Activated CD4-positive, alpha-beta memory T cell treated with anti-CD3 and anti-CD28 coated beads, Interleukin-2, amount 10 ng/mL, durations not matched to agents 7 days and 5 days (primary cell): ENCODE measurements at regions of chr5 and their contacts with region 1.

Region 1: GRCh38 chr5:171907725-171908343 is 98.6 kb downstream of the FBXW11 start:
- DNase-seq: peak; percentile 46
- H3K4me3 Mint-ChIP-seq: no peak overlapping the region
- H3K27ac Mint-ChIP-seq: no peak overlapping the region
- H3K4me1 Mint-ChIP-seq: peaks cover 44% of the 10 kb centered on the region
- H3K27me3 Mint-ChIP-seq: no peaks in the 10 kb centered on the region

Region 2: DNA sequence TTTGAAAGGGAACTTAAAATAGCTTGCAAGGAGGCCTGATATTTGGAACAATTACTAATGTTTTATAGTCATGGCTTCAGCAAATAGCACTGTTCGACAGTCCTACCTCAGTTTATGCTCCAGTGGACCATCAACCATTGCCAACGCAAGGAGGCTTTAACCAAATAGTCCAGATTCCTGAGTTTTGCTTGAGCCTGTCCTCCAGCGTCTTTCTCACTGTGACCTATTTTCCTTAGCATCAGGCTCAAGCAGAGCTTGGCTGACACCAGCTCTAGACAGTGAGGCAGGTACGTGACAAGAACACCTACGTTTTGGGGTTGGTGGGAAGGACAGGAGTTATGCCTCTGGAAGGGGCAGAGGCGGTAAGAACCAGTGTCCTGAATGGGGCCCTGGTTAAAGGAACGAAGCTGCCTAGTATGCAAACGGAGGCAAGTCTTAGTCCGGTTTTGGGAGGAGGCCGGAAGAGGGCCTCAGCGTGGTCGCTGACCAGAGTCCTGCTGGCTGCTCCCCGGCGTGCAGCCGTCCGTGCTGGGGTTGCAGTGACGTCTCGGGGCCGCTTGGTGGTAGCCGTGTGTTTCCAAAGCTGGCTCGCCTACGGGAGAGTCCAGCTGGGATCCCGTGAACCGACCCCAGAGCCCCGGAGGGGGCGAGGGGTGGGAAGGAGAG is 489.4 kb before region 1 on chr5:
- CTCF ChIA-PET with region 1: interaction called, 22 read pairs
- POLR2A ChIA-PET with region 1: no interaction called
- DNase-seq: peak; percentile 64
- H3K4me3 Mint-ChIP-seq: peak overlapping the region; percentile 64
- H3K27ac Mint-ChIP-seq: no peak overlapping the region
- H3K4me1 Mint-ChIP-seq: peaks cover 10% of the 10 kb centered on the region
- H3K27me3 Mint-ChIP-seq: peaks cover 30% of the 10 kb centered on the region

Region 3: DNA sequence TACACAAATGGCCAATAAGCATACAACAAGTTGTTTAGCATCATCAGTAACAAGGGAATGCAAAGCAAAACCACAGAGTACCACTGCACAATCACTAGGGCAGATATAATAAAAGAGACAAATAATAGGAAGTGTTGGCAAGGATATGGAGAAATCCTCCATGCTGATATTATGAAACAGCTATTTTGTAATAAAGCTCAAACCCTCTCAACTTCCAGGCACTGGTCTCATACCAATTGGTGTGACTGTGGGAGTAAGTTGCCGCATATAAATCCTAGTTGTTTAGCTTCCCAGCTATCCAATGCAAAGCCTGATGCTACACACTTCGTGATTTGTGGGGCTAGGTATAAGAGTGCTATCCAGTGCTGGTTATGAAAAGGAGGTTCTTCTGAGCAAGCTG is 33.6 kb before region 1 on chr5:
- CTCF ChIA-PET with region 1: no interaction called
- POLR2A ChIA-PET with region 1: no interaction called
- DNase-seq: no peak
- H3K4me3 Mint-ChIP-seq: no peak overlapping the region
- H3K27ac Mint-ChIP-seq: no peak overlapping the region
- H3K4me1 Mint-ChIP-seq: no peaks in the 10 kb centered on the region
- H3K27me3 Mint-ChIP-seq: no peaks in the 10 kb centered on the region

Region 4: GRCh38 chr5:172006321-172007174 is 98.7 kb after region 1 on chr5 and contains the start of gene FBXW11:
- CTCF ChIA-PET with region 1: interaction called, 31 read pairs
- POLR2A ChIA-PET with region 1: interaction called, 18 read pairs
- DNase-seq: peak; percentile 95
- H3K4me3 Mint-ChIP-seq: peak within 1 kb of the TSS; percentile 90
- H3K27ac Mint-ChIP-seq: peak within 1 kb of the TSS; percentile 94
- H3K4me1 Mint-ChIP-seq: peaks cover 50% of the 10 kb centered on the region
- H3K27me3 Mint-ChIP-seq: no peaks in the 10 kb centered on the region
- total RNA-seq, gene FBXW11: 37.4 to 38.8 TPM

Region 5: DNA sequence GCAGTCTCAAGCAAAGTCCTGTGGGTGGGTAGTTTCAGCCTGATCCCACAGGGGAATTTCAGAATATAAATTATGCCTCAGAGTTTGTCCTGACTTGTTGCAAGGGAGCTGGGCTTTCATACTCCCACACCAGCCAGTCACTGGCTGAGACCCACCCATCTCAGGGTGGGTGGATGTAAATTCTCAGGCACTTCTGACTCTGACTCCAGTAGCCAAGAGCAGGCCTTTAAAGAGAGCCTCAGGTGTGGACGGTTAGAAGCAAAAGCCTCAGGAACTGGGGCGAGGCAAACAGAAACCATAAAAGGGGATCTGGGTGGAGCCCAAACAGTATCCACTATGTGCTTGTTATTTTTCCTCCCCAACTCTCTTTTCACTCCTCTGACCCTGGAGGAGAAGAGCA is 127.2 kb after region 1 on chr5:
- CTCF ChIA-PET with region 1: interaction called, 16 read pairs
- POLR2A ChIA-PET with region 1: no interaction called
- DNase-seq: no peak
- H3K4me3 Mint-ChIP-seq: no peak overlapping the region
- H3K27ac Mint-ChIP-seq: no peak overlapping the region
- H3K4me1 Mint-ChIP-seq: peaks cover 9% of the 10 kb centered on the region
- H3K27me3 Mint-ChIP-seq: no peaks in the 10 kb centered on the region

Region 6: GRCh38 chr5:172044631-172045314 is 136.9 kb after region 1 on chr5:
- CTCF ChIA-PET with region 1: interaction called, 19 read pairs
- POLR2A ChIA-PET with region 1: no interaction called
- DNase-seq: no peak
- H3K4me3 Mint-ChIP-seq: no peak overlapping the region
- H3K27ac Mint-ChIP-seq: peak overlapping the region; percentile 24
- H3K4me1 Mint-ChIP-seq: peaks cover 13% of the 10 kb centered on the region
- H3K27me3 Mint-ChIP-seq: no peaks in the 10 kb centered on the region

Region 7: DNA sequence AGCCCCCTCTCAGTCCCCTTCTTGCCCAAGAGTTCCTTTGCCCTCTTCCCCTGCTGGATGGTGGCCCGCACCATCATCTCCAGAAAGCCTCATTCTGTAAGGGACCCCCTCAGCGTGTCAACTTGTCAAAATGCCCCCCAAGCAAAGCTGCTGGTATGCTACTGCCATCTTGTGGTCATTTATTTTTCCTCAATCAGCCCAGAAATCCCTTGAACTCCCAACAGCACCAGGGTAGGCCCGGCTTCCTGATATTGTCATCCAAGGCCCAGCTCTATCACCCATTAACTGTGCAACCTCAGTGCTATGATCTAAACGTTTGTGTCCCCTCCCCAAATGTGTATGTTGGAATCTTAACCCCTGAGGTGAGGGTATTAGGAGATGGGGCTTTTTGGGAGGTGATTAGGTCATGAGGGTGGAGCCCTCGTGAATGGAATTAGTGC is 151.8 kb after region 1 on chr5:
- CTCF ChIA-PET with region 1: interaction called, 20 read pairs
- POLR2A ChIA-PET with region 1: no interaction called
- DNase-seq: no peak
- H3K4me3 Mint-ChIP-seq: no peak overlapping the region
- H3K27ac Mint-ChIP-seq: peak overlapping the region; percentile 27
- H3K4me1 Mint-ChIP-seq: peaks cover 16% of the 10 kb centered on the region
- H3K27me3 Mint-ChIP-seq: no peaks in the 10 kb centered on the region

Region 8: DNA sequence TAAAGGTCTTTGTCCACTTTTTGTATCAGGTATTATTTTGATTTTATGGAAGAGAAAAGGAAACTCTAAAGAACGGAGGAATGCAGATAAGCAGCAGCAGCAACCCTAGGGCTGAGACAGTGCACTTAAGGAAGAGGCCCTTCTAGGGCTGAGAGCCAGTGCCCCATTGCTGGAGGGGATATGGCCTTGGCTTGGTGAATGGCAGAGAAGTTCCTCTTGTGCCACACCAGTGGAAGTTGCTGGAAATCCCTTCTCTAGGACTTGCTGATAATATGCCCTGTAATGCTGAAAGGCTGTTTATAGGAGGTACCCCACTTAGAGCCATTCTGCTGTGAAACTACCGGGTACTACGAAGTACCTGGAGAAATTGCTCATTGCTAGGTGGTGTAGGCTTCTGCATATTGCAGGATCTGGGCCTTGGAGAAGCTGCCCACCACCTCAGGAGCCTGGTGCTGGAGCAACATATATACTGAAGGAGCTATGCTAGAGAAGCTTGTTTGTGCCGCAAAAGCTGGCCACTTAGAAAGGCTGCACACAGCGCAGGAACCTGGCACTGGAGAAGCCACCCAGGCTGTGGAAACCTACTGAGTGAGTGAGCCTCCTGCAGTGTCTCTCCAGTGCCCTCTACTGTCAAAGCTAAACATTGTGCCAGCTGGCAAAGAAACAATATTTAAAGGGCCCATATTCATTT is 385.4 kb after region 1 on chr5:
- CTCF ChIA-PET with region 1: interaction called, 12 read pairs
- POLR2A ChIA-PET with region 1: interaction called, 3 read pairs
- DNase-seq: peak; percentile 70
- H3K4me3 Mint-ChIP-seq: no peak overlapping the region
- H3K27ac Mint-ChIP-seq: no peak overlapping the region
- H3K4me1 Mint-ChIP-seq: peaks cover 2% of the 10 kb centered on the region
- H3K27me3 Mint-ChIP-seq: peaks cover 11% of the 10 kb centered on the region